K562 (cell line): ENCODE measurements at regions of chr2 and their contacts with region 1.

Region 1: GRCh38 chr2:176140513-176141317 is 10.6 kb upstream of the HOXD4 start:
- DNase-seq: peak; percentile 86 to 95 (median 94)
- ATAC-seq: peak; percentile 98
- H3K4me3 ChIP-seq: peak overlapping the region; percentile 51
- H3K27ac ChIP-seq: no peak overlapping the region
- H3K4me1 ChIP-seq: peaks cover 0 to 15% of the 10 kb centered on the region in 2 experiments; a peak in 2 of 5 replicates
- H3K27me3 ChIP-seq: peaks cover 22 to 40% of the 10 kb centered on the region in 2 experiments; a peak in 4 of 5 replicates
- CTCF ChIP-seq: peak; percentile 84 to 95 (median 91)
- EP300 ChIP-seq: no peak; the same call in 1 of the 2 replicates
- POLR2A ChIP-seq: no peak
- RAD21 ChIP-seq: peak; percentile 98 to 99

Region 2: GRCh38 chr2:176056406-176056805 is 84.3 kb before region 1 on chr2:
- CTCF ChIA-PET with region 1: no interaction called
- POLR2A ChIA-PET with region 1: no interaction called
- in situ Hi-C with region 1: no loop called
- intact Hi-C with region 1: no loop called
- DNase-seq: no peak
- ATAC-seq: no peak
- H3K4me3 ChIP-seq: no peak overlapping the region
- H3K27ac ChIP-seq: no peak overlapping the region
- H3K4me1 ChIP-seq: no peaks in the 10 kb centered on the region
- H3K27me3 ChIP-seq: peaks cover 9 to 20% of the 10 kb centered on the region in 2 experiments; a peak in 4 of 5 replicates
- CTCF ChIP-seq: no peak
- EP300 ChIP-seq: no peak
- POLR2A ChIP-seq: no peak
- RAD21 ChIP-seq: no peak

Region 3: DNA sequence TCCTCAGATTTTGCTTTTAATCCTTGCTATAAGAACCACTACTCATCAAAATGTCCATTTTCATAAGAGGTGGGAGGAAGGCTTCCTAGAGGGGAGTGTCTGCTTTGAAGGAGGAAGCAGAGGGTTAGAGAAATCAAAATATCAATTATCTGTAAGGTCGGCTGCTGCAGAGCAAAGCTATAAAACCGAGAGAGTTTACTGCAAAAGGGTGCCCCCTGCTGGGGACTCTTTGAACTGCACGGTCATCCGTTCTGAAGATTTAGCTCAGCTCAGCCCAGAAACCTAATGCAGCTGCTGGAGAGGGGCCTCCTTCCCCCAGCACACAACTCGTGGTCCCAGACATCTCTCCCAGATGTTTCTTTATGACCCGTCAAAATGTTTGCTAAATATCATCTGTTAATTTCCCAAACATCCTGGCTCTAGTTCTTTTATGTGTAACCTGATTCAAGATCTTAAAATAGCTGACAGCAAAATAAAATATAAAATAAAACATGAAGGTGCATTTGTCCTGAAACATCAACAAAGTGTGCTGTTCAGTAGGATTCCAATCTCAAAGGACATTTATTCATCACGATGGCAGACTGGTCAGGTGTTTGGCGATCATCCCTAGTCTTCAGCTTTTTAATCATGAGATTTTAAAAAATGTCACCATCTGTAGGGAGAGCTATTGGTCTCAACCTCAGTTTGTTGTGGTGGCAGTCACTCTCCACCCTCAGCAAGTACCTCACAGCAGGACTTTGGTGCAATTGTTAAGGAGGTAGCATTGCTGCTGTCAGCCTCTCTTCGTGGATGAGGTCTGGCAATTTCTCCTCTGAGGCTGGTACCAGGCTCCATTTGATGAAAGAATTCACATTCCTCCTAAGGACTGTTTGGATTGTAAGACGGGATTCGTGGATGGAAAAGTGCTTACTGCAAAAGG is 314.4 kb after region 1 on chr2:
- CTCF ChIA-PET with region 1: interaction called, 25 read pairs
- POLR2A ChIA-PET with region 1: interaction called, 7 read pairs
- in situ Hi-C with region 1: loop called (anchors 5 kb)
- intact Hi-C with region 1: loop called (anchors 1 kb)
- DNase-seq: peak; percentile 65 to 77 (median 75)
- ATAC-seq: peak; percentile 92
- H3K4me3 ChIP-seq: no peak overlapping the region
- H3K27ac ChIP-seq: no peak overlapping the region
- H3K4me1 ChIP-seq: no peaks in the 10 kb centered on the region
- H3K27me3 ChIP-seq: peaks cover 0 to 3% of the 10 kb centered on the region in 2 experiments; a peak in 2 of 5 replicates
- CTCF ChIP-seq: peak; percentile 83 to 90 (median 88)
- EP300 ChIP-seq: no peak
- POLR2A ChIP-seq: no peak
- RAD21 ChIP-seq: peak; percentile 75 to 84

Region 4: GRCh38 chr2:176638167-176639015 is 497.7 kb after region 1 on chr2:
- CTCF ChIA-PET with region 1: interaction called, 40 read pairs
- POLR2A ChIA-PET with region 1: no interaction called
- in situ Hi-C with region 1: no loop called
- intact Hi-C with region 1: loop called (anchors 2 kb)
- DNase-seq: peak; percentile 59 to 78 (median 63)
- ATAC-seq: peak; percentile 98
- H3K4me3 ChIP-seq: no peak overlapping the region
- H3K27ac ChIP-seq: no peak overlapping the region
- H3K4me1 ChIP-seq: peaks cover 0 to 9% of the 10 kb centered on the region in 2 experiments; a peak in 2 of 5 replicates
- H3K27me3 ChIP-seq: peaks cover 14 to 16% of the 10 kb centered on the region in 2 experiments
- CTCF ChIP-seq: peak; percentile 71 to 85 (median 82)
- EP300 ChIP-seq: no peak
- POLR2A ChIP-seq: no peak
- RAD21 ChIP-seq: peak; percentile 82 to 83

Region 5: DNA sequence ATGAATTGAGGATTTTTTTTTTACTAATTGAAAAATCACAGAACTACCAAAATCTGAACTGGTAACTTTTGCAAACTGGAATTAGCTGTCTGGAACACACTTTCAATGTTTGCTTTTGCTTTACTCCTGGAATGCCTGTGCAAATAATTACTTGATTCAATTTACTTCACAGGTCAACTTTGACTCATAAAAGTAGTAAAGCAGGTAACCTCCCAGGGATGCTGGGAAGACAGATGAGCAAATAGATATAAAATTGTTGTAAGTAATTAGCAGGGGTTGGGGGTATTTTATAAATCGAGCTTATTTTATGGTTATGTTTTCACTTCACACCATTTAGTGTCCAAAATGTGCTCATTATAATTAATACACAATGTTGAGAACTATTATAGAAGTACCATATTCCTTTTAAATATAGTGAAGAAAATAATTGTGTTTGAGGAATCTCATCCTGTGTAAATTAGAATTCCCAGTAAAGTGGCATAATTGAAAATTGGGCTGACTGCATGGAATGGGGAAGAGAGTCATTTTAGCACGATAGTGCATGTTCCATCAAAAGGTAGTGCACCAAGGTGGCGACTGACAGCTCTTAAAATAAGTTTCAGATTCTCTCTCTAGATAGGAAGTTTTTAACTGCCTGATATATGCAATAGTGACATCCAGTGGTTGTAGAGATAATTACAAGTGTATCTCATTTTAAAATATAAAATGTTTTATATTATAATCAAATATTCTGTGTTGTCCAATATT is 673.8 kb after region 1 on chr2:
- CTCF ChIA-PET with region 1: interaction called, 3 read pairs
- POLR2A ChIA-PET with region 1: no interaction called
- in situ Hi-C with region 1: loop called (anchors 25 kb)
- intact Hi-C with region 1: no loop called
- DNase-seq: peak; percentile 34 to 48 (median 44)
- ATAC-seq: peak; percentile 66; the same call in 2 of the 3 replicates
- H3K4me3 ChIP-seq: no peak overlapping the region
- H3K27ac ChIP-seq: no peak overlapping the region
- H3K4me1 ChIP-seq: no peaks in the 10 kb centered on the region
- H3K27me3 ChIP-seq: peaks cover under 1 to 11% of the 10 kb centered on the region in 2 experiments; a peak in 3 of 5 replicates
- CTCF ChIP-seq: peak; percentile 49 to 82 (median 62); a peak in 4 of 6 replicates
- EP300 ChIP-seq: no peak
- POLR2A ChIP-seq: no peak
- RAD21 ChIP-seq: peak; percentile 71 to 78